ENCODE measurements at regions of chr14 and their contacts with region 1.

Region 1: DNA sequence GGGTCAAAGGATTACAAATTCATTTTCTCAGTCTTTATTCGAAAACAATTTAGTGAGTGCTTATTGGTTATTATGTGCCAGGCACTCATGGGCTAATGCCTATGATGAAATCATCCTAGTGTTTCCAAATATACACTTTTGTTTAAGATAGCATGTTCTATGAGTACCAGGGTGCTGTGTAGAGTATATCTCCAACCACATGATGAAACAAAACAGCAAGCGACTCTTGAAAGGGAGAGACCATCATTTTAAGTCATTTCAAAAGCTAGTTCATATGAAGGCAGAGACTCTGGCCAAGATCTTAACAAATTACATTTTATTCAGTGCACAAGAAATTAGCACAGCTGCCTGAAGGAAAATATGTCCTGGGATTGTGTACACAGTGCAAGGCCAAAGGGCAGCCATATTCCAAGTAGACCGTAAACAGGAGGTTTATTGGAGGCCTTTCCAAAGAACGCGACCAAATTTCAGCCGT is 204.2 kb downstream of the EFCAB11 start:
- DNase-seq: no peak
- ATAC-seq: no peak
- H3K4me3 Mint-ChIP-seq: no peak overlapping the region
- H3K27ac Mint-ChIP-seq: peak overlapping the region; percentile 74
- H3K4me1 Mint-ChIP-seq: peaks cover 52% of the 10 kb centered on the region
- H3K27me3 Mint-ChIP-seq: no peaks in the 10 kb centered on the region

Region 2: DNA sequence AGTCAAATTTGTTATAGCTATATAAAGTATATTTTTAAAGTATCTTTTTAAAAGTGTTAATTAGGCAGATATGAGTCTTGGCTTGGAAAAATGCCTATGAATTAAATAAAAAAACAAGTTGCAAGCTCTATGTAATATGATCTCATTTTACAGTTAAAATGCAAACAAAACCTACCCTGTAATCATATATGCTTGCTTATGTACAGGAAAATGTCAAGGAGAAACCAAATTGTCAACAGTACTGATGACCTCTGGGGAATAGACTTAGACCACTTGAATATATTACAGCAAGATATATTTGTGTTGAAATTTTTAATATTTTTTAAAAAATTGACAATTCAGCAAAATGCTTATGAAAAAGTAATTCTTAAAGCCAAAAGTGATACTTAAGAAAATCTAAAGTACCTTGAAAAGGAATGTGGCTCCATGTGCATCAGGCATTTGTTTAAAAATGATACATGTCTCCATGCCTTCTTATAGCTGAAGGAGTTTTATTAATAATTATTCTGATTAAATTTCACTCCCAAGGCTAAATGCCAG is 1244.8 kb before region 1 on chr14:
- CTCF ChIA-PET with region 1: no interaction called
- POLR2A ChIA-PET with region 1: no interaction called
- intact Hi-C with region 1: no loop called
- DNase-seq: no peak
- ATAC-seq: no peak
- H3K4me3 Mint-ChIP-seq: no peak overlapping the region
- H3K27ac Mint-ChIP-seq: no peak overlapping the region
- H3K4me1 Mint-ChIP-seq: no peaks in the 10 kb centered on the region
- H3K27me3 Mint-ChIP-seq: peaks cover 12% of the 10 kb centered on the region

Region 3: GRCh38 chr14:89422181-89422951 is 328.0 kb before region 1 on chr14:
- CTCF ChIA-PET with region 1: interaction called, 4 read pairs
- POLR2A ChIA-PET with region 1: no interaction called
- intact Hi-C with region 1: loop called (anchors 2 to 5 kb)
- DNase-seq: peak; percentile 74
- ATAC-seq: peak; percentile 70
- H3K4me3 Mint-ChIP-seq: no peak overlapping the region
- H3K27ac Mint-ChIP-seq: peak overlapping the region; percentile 65
- H3K4me1 Mint-ChIP-seq: peaks cover 74% of the 10 kb centered on the region
- H3K27me3 Mint-ChIP-seq: no peaks in the 10 kb centered on the region

Region 4: DNA sequence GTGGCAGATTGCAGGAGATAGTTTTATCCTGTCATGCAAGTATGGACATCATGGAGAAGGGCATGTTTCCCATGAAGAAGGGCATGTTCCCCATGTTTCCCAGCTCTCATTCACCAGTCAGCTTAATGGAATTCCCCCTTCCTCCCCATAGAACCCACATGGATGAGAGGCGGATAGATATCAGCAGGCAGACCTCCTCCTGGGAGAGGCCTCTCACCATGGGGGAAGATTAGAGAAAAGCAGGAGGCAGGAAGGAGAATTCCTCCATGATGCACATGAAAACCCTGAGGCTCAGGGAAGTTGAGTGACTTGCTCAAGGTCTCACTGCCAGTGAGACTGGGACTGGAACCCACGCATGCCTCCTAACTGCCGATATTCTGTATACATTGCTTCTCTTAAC is 240.4 kb before region 1 on chr14:
- CTCF ChIA-PET with region 1: interaction called, 3 read pairs
- POLR2A ChIA-PET with region 1: no interaction called
- intact Hi-C with region 1: loop called in 1 of 2 experiments (anchors 5 kb)
- DNase-seq: no peak
- ATAC-seq: no peak
- H3K4me3 Mint-ChIP-seq: peak overlapping the region; percentile 65
- H3K27ac Mint-ChIP-seq: peak overlapping the region; percentile 96
- H3K4me1 Mint-ChIP-seq: peaks cover 74% of the 10 kb centered on the region
- H3K27me3 Mint-ChIP-seq: no peaks in the 10 kb centered on the region

Region 5: GRCh38 chr14:89681086-89682018 is 69.0 kb before region 1 on chr14:
- CTCF ChIA-PET with region 1: interaction called, 4 read pairs
- POLR2A ChIA-PET with region 1: no interaction called
- intact Hi-C with region 1: loop called in 1 of 2 experiments (anchors 1 kb)
- DNase-seq: peak; percentile 81
- ATAC-seq: peak; percentile 88
- H3K4me3 Mint-ChIP-seq: peak overlapping the region; percentile 58
- H3K27ac Mint-ChIP-seq: peak overlapping the region; percentile 83
- H3K4me1 Mint-ChIP-seq: peaks cover 41% of the 10 kb centered on the region
- H3K27me3 Mint-ChIP-seq: no peaks in the 10 kb centered on the region

Region 6: GRCh38 chr14:89701211-89702043 is 48.9 kb before region 1 on chr14:
- CTCF ChIA-PET with region 1: interaction called, 4 read pairs
- POLR2A ChIA-PET with region 1: interaction called, 8 read pairs
- intact Hi-C with region 1: loop called in 1 of 2 experiments (anchors 1 kb)
- DNase-seq: peak; percentile 92
- ATAC-seq: peak; percentile 81
- H3K4me3 Mint-ChIP-seq: peak overlapping the region; percentile 65
- H3K27ac Mint-ChIP-seq: peak overlapping the region; percentile 83
- H3K4me1 Mint-ChIP-seq: peaks cover 49% of the 10 kb centered on the region
- H3K27me3 Mint-ChIP-seq: no peaks in the 10 kb centered on the region

Region 7: GRCh38 chr14:89720741-89721315 is 29.5 kb before region 1 on chr14:
- CTCF ChIA-PET with region 1: interaction called, 7 read pairs
- POLR2A ChIA-PET with region 1: interaction called, 4 read pairs
- intact Hi-C with region 1: loop called in 1 of 2 experiments (anchors 2 kb)
- DNase-seq: peak; percentile 72
- ATAC-seq: peak; percentile 82
- H3K4me3 Mint-ChIP-seq: peak overlapping the region; percentile 37
- H3K27ac Mint-ChIP-seq: peak overlapping the region; percentile 96
- H3K4me1 Mint-ChIP-seq: peaks cover 74% of the 10 kb centered on the region
- H3K27me3 Mint-ChIP-seq: no peaks in the 10 kb centered on the region